T-cell (primary cell): ENCODE measurements at regions of chr16 and their contacts with region 1.

Region 1: GRCh38 chr16:46961373-46962353 is 11.8 kb downstream of the DNAJA2 start:
- DNase-seq: peak in 16 of 35 experiments; percentile 8 to 51 (median 17)
- ATAC-seq: peak; percentile 78 to 90 (median 87)
- H3K4me3 ChIP-seq: no peak overlapping the region
- H3K4me3 Mint-ChIP-seq: peak overlapping the region in 1 of 3 donors; percentile 9
- H3K27ac ChIP-seq: peak overlapping the region; percentile 9
- H3K27ac Mint-ChIP-seq: peak overlapping the region; percentile 78 to 79
- H3K4me1 ChIP-seq: no peaks in the 10 kb centered on the region
- H3K4me1 Mint-ChIP-seq: peaks cover 41 to 46% (median 44%) of the 10 kb centered on the region in 3 donors
- H3K27me3 ChIP-seq: no peaks in the 10 kb centered on the region
- H3K27me3 Mint-ChIP-seq: no peaks in the 10 kb centered on the region

Region 2: DNA sequence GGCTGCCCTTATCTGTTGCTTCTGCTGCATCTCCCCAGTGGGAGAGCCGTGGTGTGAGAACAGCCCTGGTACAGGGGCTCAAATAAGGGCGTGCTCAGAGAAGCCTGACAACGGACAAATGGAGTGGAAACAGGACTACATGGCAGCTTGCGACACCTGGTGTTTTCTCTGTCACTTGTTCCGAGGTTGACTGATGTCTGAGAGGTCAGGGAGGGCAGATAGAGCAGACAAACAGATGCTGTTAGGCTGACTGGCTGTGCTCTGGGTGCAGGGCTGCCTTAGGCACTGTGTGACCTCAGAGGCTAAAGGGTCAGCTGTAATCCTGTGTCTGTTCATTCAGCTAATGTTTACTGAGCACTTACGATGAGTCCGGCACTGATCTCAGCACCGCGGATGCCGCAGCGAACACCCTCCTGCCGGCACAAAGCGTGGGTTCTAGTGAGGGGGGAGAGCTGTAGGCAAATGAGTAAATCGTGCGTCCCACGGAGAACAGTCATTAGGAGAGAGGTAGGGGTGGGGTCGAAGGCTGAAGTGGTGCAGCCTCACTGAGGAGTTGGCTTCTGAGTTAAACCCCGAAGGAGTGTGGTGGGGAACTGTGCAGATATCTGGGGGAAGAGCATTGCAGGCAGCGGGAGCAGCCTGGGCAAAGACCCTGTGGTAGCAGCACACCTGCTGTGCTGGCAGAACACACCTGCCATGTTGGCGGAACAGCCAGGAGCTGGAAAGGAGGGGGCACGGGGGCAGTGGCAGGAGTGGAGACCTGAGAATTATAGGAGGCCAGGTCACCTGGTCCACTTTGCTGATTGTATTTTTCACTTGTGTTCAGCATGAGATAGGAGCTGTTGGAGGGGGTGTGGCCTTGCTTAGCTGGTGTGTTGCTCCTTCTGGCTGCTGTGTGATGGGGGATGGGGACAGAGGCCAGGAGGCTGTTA is 42.5 kb before region 1 on chr16:
- CTCF ChIA-PET with region 1: no interaction called
- POLR2A ChIA-PET with region 1: no interaction called
- DNase-seq: no peak
- ATAC-seq: peak in 2 of 4 experiments; percentile 12 to 19
- H3K4me3 ChIP-seq: no peak overlapping the region
- H3K4me3 Mint-ChIP-seq: no peak overlapping the region
- H3K27ac ChIP-seq: no peak overlapping the region
- H3K27ac Mint-ChIP-seq: no peak overlapping the region
- H3K4me1 ChIP-seq: no peaks in the 10 kb centered on the region
- H3K4me1 Mint-ChIP-seq: no peaks in the 10 kb centered on the region
- H3K27me3 ChIP-seq: peaks cover 0 to 3% of the 10 kb centered on the region in 2 experiments
- H3K27me3 Mint-ChIP-seq: no peaks in the 10 kb centered on the region

Region 3: GRCh38 chr16:46973207-46973995 is 11.7 kb after region 1 on chr16 and contains the start of gene DNAJA2:
- CTCF ChIA-PET with region 1: interaction called, 4 read pairs
- POLR2A ChIA-PET with region 1: interaction called, 5 to 14 read pairs
- DNase-seq: peak; percentile 76 to 96 (median 89)
- ATAC-seq: peak; percentile 92 to 96 (median 94)
- H3K4me3 ChIP-seq: peak within 1 kb of the TSS; percentile 62 to 75
- H3K4me3 Mint-ChIP-seq: peak within 1 kb of the TSS; percentile 92 to 98 (median 95)
- H3K27ac ChIP-seq: peak within 1 kb of the TSS; percentile 92
- H3K27ac Mint-ChIP-seq: peak within 1 kb of the TSS; percentile 99
- H3K4me1 ChIP-seq: peaks cover 14 to 29% of the 10 kb centered on the region in 2 experiments
- H3K4me1 Mint-ChIP-seq: peaks cover 50 to 64% (median 62%) of the 10 kb centered on the region in 3 donors
- H3K27me3 ChIP-seq: no peaks in the 10 kb centered on the region
- H3K27me3 Mint-ChIP-seq: no peaks in the 10 kb centered on the region
- total RNA-seq, gene DNAJA2: 60.4 to 75.3 (median 67.4) TPM

Region 4: GRCh38 chr16:46996391-46996790 is 34.7 kb after region 1 on chr16:
- CTCF ChIA-PET with region 1: no interaction called
- POLR2A ChIA-PET with region 1: no interaction called
- DNase-seq: no peak
- ATAC-seq: no peak
- H3K4me3 ChIP-seq: no peak overlapping the region
- H3K4me3 Mint-ChIP-seq: no peak overlapping the region
- H3K27ac ChIP-seq: no peak overlapping the region
- H3K27ac Mint-ChIP-seq: peak overlapping the region in 1 of 2 donors; percentile 20
- H3K4me1 ChIP-seq: no peaks in the 10 kb centered on the region
- H3K4me1 Mint-ChIP-seq: no peaks in the 10 kb centered on the region
- H3K27me3 ChIP-seq: peaks cover 0 to 11% of the 10 kb centered on the region in 2 experiments
- H3K27me3 Mint-ChIP-seq: no peaks in the 10 kb centered on the region

Region 5: GRCh38 chr16:48596326-48596725 is 1634.7 kb after region 1 on chr16:
- CTCF ChIA-PET with region 1: no interaction called
- POLR2A ChIA-PET with region 1: interaction called in 1 of 2 experiments, 11 read pairs
- DNase-seq: peak in 2 of 35 experiments; percentile 8 to 49
- ATAC-seq: peak in 2 of 4 experiments; percentile 48 to 56
- H3K4me3 ChIP-seq: no peak overlapping the region
- H3K4me3 Mint-ChIP-seq: peak overlapping the region in 1 of 3 donors; percentile 8
- H3K27ac ChIP-seq: no peak overlapping the region
- H3K27ac Mint-ChIP-seq: peak overlapping the region; percentile 69 to 75
- H3K4me1 ChIP-seq: peaks cover 15 to 19% of the 10 kb centered on the region in 2 experiments
- H3K4me1 Mint-ChIP-seq: peaks cover 60 to 67% (median 65%) of the 10 kb centered on the region in 3 donors
- H3K27me3 ChIP-seq: no peaks in the 10 kb centered on the region
- H3K27me3 Mint-ChIP-seq: no peaks in the 10 kb centered on the region